Endothelial cell of umbilical vein (primary cell): ENCODE measurements at regions of chr4 and their contacts with region 1.

Region 1: DNA sequence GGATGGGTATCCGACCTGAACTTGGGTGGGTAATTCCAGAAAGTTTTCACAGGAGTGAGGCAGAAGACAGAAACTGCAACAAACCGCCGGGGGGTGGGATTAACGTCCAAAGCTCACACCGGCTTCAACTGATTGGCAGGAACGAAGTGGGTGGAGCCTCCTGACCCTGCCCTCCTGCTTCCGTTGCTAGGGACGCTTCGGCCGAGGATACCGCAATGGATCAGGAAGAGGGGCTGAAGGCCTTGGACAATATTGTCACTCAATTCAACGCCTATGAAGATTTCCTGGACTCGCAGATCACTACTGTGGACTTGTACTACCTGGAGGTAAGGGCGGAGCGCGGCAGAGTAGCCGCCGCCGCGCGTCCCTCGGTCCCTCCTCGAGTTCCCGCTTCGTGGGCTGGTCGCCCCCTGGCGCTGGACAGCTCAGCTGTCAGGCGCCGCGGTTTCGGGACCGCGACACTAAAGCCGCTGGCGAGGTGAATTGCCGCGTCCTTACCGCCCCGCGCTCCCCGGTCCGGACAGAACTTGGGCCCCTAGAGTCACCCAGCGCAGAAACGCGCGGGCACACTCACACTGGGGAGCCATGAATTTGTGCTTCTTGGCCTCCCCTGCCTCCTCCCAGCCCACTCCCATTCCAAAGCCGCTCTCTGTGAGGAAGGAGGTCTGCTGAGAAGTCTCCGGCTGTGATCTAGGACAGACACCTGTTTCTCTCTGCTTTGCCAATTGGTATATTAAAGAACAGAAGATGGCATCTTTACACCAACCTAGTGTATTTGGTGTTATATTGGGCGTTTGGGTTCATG is at the start of gene CFAP299:
- DNase-seq: peak; percentile 68
- H3K4me3 ChIP-seq: peak within 1 kb of the TSS; percentile 37 to 67 (median 46)
- H3K27ac ChIP-seq: no peak within 1 kb of the TSS
- H3K4me1 ChIP-seq: peaks cover 6% of the 10 kb centered on the region
- H3K27me3 ChIP-seq: peaks cover 18 to 63% of the 10 kb centered on the region in 2 experiments
- CTCF ChIP-seq: peak; percentile 54 to 67
- POLR2A ChIP-seq: no peak
- total RNA-seq, gene CFAP299: not detected in 2 replicates

Region 2: DNA sequence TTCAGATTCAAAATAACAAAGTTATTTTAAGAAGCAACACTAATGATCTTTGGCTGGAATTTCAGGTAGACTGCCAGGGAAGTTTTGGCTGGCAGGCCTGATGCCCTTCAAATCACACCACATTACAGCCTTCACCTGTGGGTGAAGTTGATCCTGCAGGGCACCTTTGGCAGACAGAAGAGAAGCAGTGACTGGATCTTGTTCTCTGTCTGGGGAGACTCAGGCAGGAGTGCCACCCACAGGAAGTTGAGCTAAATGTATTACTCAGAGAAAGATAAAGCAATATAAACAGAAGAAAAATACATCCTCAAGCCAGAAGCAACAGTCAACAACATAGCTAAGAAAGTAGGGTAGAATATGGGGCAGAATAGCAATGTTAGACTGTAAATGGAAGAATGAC is 13.0 kb before region 1 on chr4:
- CTCF ChIA-PET with region 1: interaction called, 31 read pairs
- POLR2A ChIA-PET with region 1: no interaction called
- dilution Hi-C with region 1: no loop called
- intact Hi-C with region 1: no loop called
- DNase-seq: peak; percentile 24
- H3K4me3 ChIP-seq: no peak overlapping the region
- H3K27ac ChIP-seq: no peak overlapping the region
- H3K4me1 ChIP-seq: no peaks in the 10 kb centered on the region
- H3K27me3 ChIP-seq: no peaks in the 10 kb centered on the region
- CTCF ChIP-seq: no peak
- POLR2A ChIP-seq: no peak

Region 3: GRCh38 chr4:81844717-81845116 is 1509.0 kb after region 1 on chr4:
- CTCF ChIA-PET with region 1: no interaction called
- POLR2A ChIA-PET with region 1: no interaction called
- dilution Hi-C with region 1: no loop called
- intact Hi-C with region 1: no loop called
- DNase-seq: peak; percentile 79
- H3K4me3 ChIP-seq: no peak overlapping the region
- H3K27ac ChIP-seq: no peak overlapping the region
- H3K4me1 ChIP-seq: no peaks in the 10 kb centered on the region
- H3K27me3 ChIP-seq: no peaks in the 10 kb centered on the region
- CTCF ChIP-seq: peak; percentile 55 to 57
- POLR2A ChIP-seq: no peak